HEK293 (cell line): ENCODE measurements at regions of chr19 and their contacts with region 1.

Region 1: GRCh38 chr19:29714953-29715700 is at the start of gene C19orf12:
- H3K4me3 ChIP-seq: peak within 1 kb of the TSS; percentile 65
- H3K27ac ChIP-seq: peak within 1 kb of the TSS; percentile 96
- H3K4me1 ChIP-seq: peaks cover 16% of the 10 kb centered on the region
- CTCF ChIP-seq: 0 out of 2 replicates have a peak, but pooled peaks have one; percentile 34

Region 2: DNA sequence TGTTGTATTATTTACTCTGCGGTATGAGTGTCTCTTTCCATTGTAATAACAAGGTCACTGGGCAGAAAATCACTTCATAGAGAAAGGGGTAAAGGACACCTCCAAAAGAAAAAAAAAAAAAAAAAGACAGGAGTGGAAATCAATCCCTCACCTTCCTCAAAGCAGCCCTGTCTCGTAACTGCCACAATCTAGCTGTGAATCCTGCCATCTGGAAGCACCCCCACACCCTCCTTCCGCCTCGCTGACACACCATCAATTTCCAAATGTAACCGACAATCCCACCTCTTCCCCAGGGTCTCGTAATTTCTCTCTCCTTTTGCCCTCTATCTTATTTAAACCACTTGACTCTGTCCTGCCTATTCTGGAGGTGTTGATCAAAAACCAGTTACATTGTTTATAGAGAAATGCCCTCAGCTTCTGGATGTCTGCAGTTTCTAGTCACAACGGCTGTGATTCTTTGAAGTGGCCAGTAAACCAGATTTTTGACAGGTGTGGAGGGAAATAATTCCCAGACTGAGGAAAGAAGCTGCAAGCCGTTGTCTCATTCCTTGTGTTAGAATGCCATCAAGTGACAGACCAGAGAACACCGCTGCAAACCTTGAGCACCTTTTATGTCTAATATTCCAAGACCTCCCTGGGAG is 118.1 kb before region 1 on chr19:
- CTCF ChIA-PET with region 1: interaction called, 11 read pairs
- POLR2A ChIA-PET with region 1: interaction called, 3 read pairs
- H3K4me3 ChIP-seq: no peak overlapping the region
- H3K27ac ChIP-seq: peak overlapping the region; percentile 37; the same call in 1 of the 2 replicates
- H3K4me1 ChIP-seq: peaks cover 21% of the 10 kb centered on the region
- CTCF ChIP-seq: peak; percentile 87

Region 3: DNA sequence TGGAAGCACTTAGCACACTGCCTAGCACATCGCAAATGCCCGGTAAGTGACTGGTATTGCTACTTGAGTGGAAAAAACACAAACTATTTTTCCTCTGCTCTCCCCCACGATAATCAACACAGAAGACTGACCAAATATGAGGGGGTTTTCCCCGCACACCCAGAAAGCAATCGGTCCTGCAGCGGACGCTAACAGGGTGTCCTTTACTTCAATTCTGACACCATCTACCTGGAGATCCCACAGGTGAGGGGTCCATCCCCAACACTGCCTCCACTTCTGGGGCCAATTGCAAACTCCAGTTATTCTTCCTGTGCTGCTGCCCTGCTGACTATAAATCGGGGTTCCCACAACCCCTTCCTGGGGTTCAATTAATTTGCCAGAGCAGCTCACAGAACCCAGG is 76.0 kb before region 1 on chr19:
- CTCF ChIA-PET with region 1: interaction called, 14 read pairs
- POLR2A ChIA-PET with region 1: no interaction called
- H3K4me3 ChIP-seq: no peak overlapping the region
- H3K27ac ChIP-seq: no peak overlapping the region
- H3K4me1 ChIP-seq: no peaks in the 10 kb centered on the region
- CTCF ChIP-seq: no peak

Region 4: DNA sequence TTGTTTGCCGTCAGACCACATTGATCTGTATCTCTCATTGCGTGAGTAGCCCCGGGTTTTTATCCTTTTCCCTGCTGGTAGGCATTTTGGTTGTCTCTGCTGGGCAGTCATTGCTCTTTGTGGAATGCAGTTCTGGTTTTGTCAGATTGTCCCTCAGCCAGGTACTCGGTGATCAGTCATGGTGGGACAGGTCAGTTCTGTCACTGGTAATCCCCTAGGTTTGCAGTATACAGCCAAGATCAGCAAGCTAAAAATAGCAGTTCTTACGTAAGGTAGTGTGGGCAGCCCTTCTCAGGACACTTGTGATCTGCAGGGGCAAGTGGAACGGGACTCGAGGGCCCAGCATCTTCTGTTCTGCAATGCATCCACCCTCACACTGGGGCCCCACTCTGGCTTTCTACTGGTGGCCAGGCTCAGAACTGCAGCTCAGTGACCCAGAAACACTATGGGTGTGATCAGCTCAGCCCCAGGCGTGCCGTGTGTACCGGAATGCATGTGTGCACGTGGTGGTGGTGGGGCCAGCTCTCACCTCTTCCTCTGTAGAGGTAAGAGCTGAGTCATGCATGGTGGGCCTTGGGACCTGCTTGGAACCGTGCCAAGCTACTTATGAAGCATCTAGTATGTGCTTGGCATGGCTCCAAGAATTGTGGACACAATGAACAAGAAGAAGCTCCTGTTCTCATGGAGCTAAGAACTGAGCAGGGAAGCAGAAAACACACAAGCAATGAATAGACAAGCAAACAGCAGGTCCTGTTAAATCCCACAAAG is 43.5 kb before region 1 on chr19:
- CTCF ChIA-PET with region 1: interaction called, 16 read pairs
- POLR2A ChIA-PET with region 1: interaction called, 25 read pairs
- H3K4me3 ChIP-seq: no peak overlapping the region
- H3K27ac ChIP-seq: peak overlapping the region; percentile 32
- H3K4me1 ChIP-seq: peaks cover 27% of the 10 kb centered on the region
- CTCF ChIP-seq: no peak

Region 5: GRCh38 chr19:29704562-29705558 is 10.3 kb before region 1 on chr19:
- CTCF ChIA-PET with region 1: interaction called, 37 read pairs
- POLR2A ChIA-PET with region 1: interaction called, 16 read pairs
- H3K4me3 ChIP-seq: no peak overlapping the region
- H3K27ac ChIP-seq: no peak overlapping the region
- H3K4me1 ChIP-seq: no peaks in the 10 kb centered on the region
- CTCF ChIP-seq: no peak

Region 6: GRCh38 chr19:29858000-29858596 is 143.0 kb after region 1 on chr19:
- CTCF ChIA-PET with region 1: interaction called, 10 read pairs
- POLR2A ChIA-PET with region 1: no interaction called
- H3K4me3 ChIP-seq: no peak overlapping the region
- H3K27ac ChIP-seq: no peak overlapping the region
- H3K4me1 ChIP-seq: peaks cover 10% of the 10 kb centered on the region
- CTCF ChIP-seq: peak; percentile 86